Uterus (tissue), 4 donors: ENCODE measurements at regions of chr20 and their contacts with region 1.

Region 1: GRCh38 chr20:38073307-38074071 is 39.9 kb downstream of the RPRD1B start:
- DNase-seq: peak; percentile 73 to 86
- H3K4me3 ChIP-seq: no peak overlapping the region
- H3K27ac ChIP-seq: peak overlapping the region; percentile 82 to 86
- H3K4me1 ChIP-seq: peaks cover 0 to 21% of the 10 kb centered on the region in 2 donors
- H3K27me3 ChIP-seq: no peaks in the 10 kb centered on the region
- CTCF ChIP-seq: peak; percentile 77 to 89 (median 78)
- POLR2A ChIP-seq: no peak

Region 2: DNA sequence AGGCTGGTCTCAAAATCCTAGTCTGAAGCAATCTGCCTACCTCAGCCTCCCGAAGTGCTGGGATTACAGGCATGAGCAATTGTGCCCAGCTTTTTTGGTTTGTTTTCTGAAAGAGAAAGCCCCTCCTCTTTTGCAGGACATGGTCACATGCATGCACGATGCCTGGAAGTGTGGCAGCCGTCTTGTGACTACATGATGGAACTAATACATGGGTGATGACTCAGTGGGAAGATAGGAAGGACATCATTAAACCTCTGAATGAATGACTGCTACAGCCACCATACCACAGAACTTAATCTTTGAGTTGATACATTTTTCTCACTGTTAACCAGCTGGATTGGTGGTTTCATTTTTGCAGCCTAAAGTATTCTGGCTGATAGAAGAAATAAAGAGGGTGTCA is 393.1 kb before region 1 on chr20:
- intact Hi-C with region 1: no loop called
- DNase-seq: no peak
- H3K4me3 ChIP-seq: no peak overlapping the region
- H3K27ac ChIP-seq: no peak overlapping the region
- H3K4me1 ChIP-seq: no peaks in the 10 kb centered on the region
- H3K27me3 ChIP-seq: no peaks in the 10 kb centered on the region
- CTCF ChIP-seq: no peak
- POLR2A ChIP-seq: no peak

Region 3: DNA sequence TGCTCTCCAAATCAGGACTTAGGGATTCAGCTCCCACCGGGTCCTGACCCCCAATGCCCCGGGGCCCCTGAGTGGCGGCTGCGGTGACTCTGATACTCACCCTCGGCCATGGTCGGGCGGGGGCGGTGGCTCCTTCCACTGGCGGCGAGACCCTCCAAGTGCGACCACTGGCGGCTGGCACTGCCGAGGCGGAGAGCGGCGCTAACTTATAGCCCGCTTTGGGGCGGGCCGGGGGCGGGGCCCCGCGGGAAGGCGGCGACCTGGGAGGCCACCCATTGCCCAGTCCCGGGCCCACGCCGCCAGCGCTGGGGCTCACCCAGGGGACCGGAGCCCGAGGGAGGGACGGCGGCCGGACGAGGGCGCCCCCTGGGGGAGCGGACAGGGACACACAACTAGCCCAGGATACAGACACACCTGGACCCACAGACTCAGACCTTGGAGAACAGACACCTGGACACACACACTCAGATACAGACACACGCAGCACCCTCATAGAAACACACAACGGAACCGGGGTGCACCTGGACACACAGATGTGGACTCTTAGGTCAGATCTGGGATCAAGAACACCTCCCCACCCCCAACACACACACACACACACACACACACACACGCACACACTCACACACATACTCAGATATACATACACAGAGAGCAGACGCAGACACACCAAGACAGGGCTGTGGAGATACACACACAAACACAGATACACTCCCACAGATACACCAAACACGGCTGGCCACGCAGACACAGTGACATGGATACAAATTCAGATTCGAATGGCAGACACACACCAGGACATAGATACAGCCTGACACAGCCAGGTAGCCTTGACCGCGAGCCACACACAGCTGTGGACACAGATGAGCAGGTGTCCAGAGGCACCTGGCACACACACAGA is 91.8 kb after region 1 on chr20 and contains the start of gene TGM2:
- intact Hi-C with region 1: loop called (anchors 5 kb)
- DNase-seq: peak; percentile 84 to 85
- H3K4me3 ChIP-seq: peak within 1 kb of the TSS; percentile 42 to 53
- H3K27ac ChIP-seq: peak within 1 kb of the TSS; percentile 89 to 90
- H3K4me1 ChIP-seq: peaks cover 0 to 5% of the 10 kb centered on the region in 2 donors
- H3K27me3 ChIP-seq: no peaks in the 10 kb centered on the region
- CTCF ChIP-seq: peak; percentile 88 to 98 (median 94)
- POLR2A ChIP-seq: peak; percentile 55 to 63
- total RNA-seq, gene TGM2: 136 to 639 (median 209) TPM

Region 4: DNA sequence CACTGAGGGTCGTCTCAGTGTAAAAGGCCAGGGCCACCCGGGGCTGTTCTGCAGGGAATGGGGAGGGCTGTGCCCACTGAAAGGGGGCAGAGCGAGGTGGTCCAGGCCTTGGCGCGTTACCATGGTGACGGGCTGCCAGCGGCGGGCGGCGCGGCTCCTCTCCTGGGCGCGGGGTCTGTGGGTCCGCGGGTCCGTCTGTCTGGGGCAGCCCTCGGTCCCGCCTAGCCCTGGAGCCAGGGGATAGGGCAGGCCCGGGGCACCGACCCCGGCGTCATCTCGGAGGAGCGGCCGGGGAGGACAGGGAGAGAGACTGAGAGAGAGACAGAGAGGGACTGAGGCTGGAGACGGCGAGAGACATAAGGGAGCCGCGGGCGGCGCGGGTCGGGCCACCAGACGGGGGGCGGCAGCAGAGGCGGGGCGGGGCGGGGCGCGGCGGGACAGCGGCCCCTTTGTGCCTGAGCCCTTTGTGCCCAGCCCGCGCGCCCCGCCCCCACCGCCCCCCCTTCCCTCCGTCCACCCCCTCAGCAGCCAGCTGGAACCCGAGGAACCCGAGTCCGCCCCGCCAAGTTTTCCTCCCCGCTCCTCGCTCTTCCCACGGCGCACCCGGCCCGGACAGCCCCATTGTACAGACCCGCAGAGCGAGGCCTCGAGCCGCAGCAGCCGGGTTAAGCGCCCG is 187.0 kb after region 1 on chr20 and contains the start of gene KIAA1755:
- intact Hi-C with region 1: no loop called
- DNase-seq: peak; percentile 31 to 59
- H3K4me3 ChIP-seq: peak within 1 kb of the TSS; percentile 32 to 49
- H3K27ac ChIP-seq: peak within 1 kb of the TSS; percentile 84 to 90
- H3K4me1 ChIP-seq: no peaks in the 10 kb centered on the region
- H3K27me3 ChIP-seq: peaks cover 0 to 4% of the 10 kb centered on the region in 2 donors
- CTCF ChIP-seq: no peak
- POLR2A ChIP-seq: no peak
- total RNA-seq, gene KIAA1755: 5.3 to 47.6 (median 15.7) TPM